Activated CD4-positive, alpha-beta memory T cell treated with anti-CD3 and anti-CD28 coated beads for 36 hours (primary cell): ENCODE measurements at regions of chr5 and their contacts with region 1.

Region 1: GRCh38 chr5:138352071-138352721 is at the start of gene KDM3B:
- DNase-seq: peak; percentile 95
- H3K4me3 Mint-ChIP-seq: peak within 1 kb of the TSS; percentile 91
- H3K27ac Mint-ChIP-seq: peak within 1 kb of the TSS; percentile 91
- H3K4me1 Mint-ChIP-seq: peaks cover 30% of the 10 kb centered on the region
- H3K27me3 Mint-ChIP-seq: no peaks in the 10 kb centered on the region
- total RNA-seq, gene KDM3B: 38.6 to 39.6 TPM

Region 2: GRCh38 chr5:138178516-138179276 is 173.5 kb before region 1 on chr5 and contains the starts of genes BRD8 and KIF20A:
- CTCF ChIA-PET with region 1: interaction called, 19 read pairs
- POLR2A ChIA-PET with region 1: interaction called, 3 read pairs
- intact Hi-C with region 1: loop called (anchors 1 kb)
- DNase-seq: peak; percentile 96
- H3K4me3 Mint-ChIP-seq: no peak within 1 kb of the TSS
- H3K27ac Mint-ChIP-seq: no peak within 1 kb of the TSS
- H3K4me1 Mint-ChIP-seq: peaks cover 17% of the 10 kb centered on the region
- H3K27me3 Mint-ChIP-seq: no peaks in the 10 kb centered on the region
- total RNA-seq, gene BRD8: 62.9 to 65.8 TPM
- total RNA-seq, gene KIF20A: 55.5 to 60.3 TPM

Region 3: DNA sequence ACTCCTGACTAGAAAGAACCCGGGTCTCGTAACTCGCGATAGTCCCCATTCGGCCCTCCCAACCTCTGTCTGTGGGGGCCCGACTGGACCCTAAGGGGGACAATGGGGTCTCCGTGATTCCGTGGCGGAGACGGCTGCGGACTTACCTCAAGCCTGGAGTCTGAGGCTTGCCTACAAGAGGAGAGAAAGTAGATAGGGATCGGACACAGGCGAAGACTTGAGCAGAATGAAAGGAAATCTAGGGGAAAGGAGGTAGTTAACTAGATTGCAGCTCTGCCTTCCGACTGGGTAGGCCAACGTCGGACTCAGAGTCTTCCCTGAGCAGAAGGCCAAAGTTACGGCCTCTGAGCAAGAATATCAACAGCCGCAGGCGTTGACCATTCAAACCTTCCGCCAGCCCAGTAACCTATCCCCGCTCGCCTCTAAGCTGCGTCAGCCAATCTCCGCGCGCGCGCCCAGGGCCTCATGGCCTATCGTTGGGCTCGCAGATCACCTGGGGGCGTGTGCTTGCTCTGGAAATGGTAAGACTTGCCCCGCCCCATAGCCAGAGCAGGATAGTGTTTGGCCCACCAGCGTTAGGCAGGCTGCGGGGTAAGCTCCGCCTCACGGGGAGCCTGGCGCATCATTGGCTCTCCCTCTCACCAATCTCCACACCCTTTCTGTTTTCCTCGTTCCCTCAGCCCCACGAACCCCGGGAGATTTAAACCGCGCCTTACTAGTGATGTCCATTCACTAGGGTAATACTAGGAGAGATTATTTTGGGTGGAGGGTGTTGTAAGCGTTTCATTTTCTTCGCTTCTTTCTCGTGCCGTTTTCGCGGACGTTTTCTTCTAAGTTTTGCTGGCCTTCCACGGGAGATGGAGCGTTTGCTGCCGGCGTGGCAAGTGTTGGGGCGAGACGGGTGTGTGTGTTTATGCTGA is 20.5 kb before region 1 on chr5 and contains the start of gene CDC25C:
- CTCF ChIA-PET with region 1: interaction called, 192 read pairs
- POLR2A ChIA-PET with region 1: interaction called, 105 read pairs
- intact Hi-C with region 1: loop called (anchors 1 kb)
- DNase-seq: peak; percentile 98
- H3K4me3 Mint-ChIP-seq: peak within 1 kb of the TSS; percentile 83
- H3K27ac Mint-ChIP-seq: peak within 1 kb of the TSS; percentile 81
- H3K4me1 Mint-ChIP-seq: peaks cover 23% of the 10 kb centered on the region
- H3K27me3 Mint-ChIP-seq: no peaks in the 10 kb centered on the region
- total RNA-seq, gene CDC25C: 19.1 to 19.2 TPM

Region 4: DNA sequence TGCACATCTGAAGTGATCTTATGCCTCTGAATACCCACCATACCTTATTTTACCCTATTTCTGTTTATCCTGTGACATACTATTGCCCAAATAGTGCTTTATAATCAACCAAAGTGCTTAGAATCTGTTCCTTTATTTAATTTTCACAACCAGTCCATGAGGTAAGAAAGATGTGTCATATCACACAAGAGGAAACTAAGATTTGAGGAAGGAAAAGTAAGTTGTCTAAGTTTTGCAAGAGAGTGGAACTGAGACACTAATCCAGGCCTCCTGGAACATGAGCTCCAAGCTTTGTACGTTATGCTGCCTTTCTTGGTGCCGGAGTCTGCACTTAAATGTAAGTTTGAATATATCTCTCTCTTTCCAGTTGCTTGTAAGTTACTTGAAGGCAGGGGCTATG is 17.5 kb after region 1 on chr5:
- CTCF ChIA-PET with region 1: interaction called, 70 read pairs
- POLR2A ChIA-PET with region 1: interaction called, 7 read pairs
- intact Hi-C with region 1: no loop called
- DNase-seq: no peak
- H3K4me3 Mint-ChIP-seq: no peak overlapping the region
- H3K27ac Mint-ChIP-seq: no peak overlapping the region
- H3K4me1 Mint-ChIP-seq: peaks cover 45% of the 10 kb centered on the region
- H3K27me3 Mint-ChIP-seq: no peaks in the 10 kb centered on the region

Region 5: GRCh38 chr5:138408023-138408422 is 55.8 kb after region 1 on chr5:
- CTCF ChIA-PET with region 1: interaction called, 29 read pairs
- POLR2A ChIA-PET with region 1: no interaction called
- intact Hi-C with region 1: loop called (anchors 5 kb)
- DNase-seq: peak; percentile 71
- H3K4me3 Mint-ChIP-seq: peak overlapping the region; percentile 8
- H3K27ac Mint-ChIP-seq: peak overlapping the region; percentile 77
- H3K4me1 Mint-ChIP-seq: peaks cover 13% of the 10 kb centered on the region
- H3K27me3 Mint-ChIP-seq: no peaks in the 10 kb centered on the region